ENCODE measurements at regions of chr10 and their contacts with region 1.

Region 1: GRCh38 chr10:88932539-88933256 is 19.9 kb downstream of the ACTA2 start:
- DNase-seq: peak; percentile 83
- H3K4me3 ChIP-seq: no peak overlapping the region
- H3K27ac ChIP-seq: peak overlapping the region; percentile 64 to 97 (median 70)
- H3K4me1 ChIP-seq: peaks cover 0 to 38% (median 21%) of the 10 kb centered on the region in 4 donors
- H3K27me3 ChIP-seq: no peaks in the 10 kb centered on the region
- CTCF ChIP-seq: peak; percentile 82 to 96 (median 91)
- EP300 ChIP-seq: no peak
- POLR2A ChIP-seq: no peak

Region 2: DNA sequence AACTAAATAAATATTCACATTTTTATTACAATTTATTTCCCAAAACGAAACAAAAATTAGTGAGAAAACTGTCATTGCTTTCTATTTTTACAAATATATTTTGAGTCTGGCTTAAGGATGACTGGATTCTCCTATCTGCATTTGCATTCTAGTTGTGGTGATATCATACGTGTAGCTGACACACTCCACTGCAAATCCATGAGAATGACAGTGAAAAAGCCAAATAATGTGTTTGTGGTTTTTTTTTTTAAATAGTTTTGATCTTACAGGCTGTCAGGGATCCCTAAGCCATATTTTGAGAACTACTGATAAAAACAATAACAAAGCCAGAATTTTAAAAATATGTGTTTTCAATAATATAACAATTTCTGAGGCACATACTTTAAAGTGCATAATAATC is 58.4 kb before region 1 on chr10:
- intact Hi-C with region 1: no loop called
- DNase-seq: no peak
- H3K4me3 ChIP-seq: no peak overlapping the region
- H3K27ac ChIP-seq: no peak overlapping the region
- H3K4me1 ChIP-seq: peaks cover 0 to under 1% (median 0%) of the 10 kb centered on the region in 4 donors
- H3K27me3 ChIP-seq: no peaks in the 10 kb centered on the region
- CTCF ChIP-seq: no peak
- EP300 ChIP-seq: no peak
- POLR2A ChIP-seq: no peak

Region 3: DNA sequence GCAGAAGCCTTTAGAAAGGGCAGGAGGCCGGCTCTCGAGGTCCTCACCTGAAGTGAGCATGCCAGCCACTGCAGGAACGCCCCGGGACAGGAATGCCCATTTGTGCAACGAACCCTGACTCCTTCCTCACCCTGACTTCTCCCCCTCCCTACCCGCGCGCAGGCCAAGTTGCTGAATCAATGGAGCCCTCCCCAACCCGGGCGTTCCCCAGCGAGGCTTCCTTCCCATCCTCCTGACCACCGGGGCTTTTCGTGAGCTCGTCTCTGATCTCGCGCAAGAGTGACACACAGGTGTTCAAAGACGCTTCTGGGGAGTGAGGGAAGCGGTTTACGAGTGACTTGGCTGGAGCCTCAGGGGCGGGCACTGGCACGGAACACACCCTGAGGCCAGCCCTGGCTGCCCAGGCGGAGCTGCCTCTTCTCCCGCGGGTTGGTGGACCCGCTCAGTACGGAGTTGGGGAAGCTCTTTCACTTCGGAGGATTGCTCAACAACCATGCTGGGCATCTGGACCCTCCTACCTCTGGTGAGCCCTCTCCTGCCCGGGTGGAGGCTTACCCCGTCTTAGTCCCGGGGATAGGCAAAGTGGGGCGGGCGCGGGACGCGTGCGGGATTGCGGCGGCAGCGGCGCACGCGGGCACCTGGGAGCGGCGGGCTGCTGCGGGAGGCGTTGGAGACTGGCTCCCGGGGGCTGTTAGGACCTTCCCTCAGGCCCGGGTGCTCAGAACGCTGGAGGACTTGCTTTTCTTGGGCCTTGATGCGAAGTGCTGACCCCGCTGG is 57.9 kb after region 1 on chr10 and contains the start of gene FAS:
- intact Hi-C with region 1: loop called (anchors 1 kb)
- DNase-seq: peak; percentile 91
- H3K4me3 ChIP-seq: peak within 1 kb of the TSS; percentile 72 to 88 (median 78)
- H3K27ac ChIP-seq: peak within 1 kb of the TSS; percentile 87 to 98 (median 93)
- H3K4me1 ChIP-seq: peaks cover 0 to 60% (median 33%) of the 10 kb centered on the region in 4 donors
- H3K27me3 ChIP-seq: no peaks in the 10 kb centered on the region
- CTCF ChIP-seq: no peak
- EP300 ChIP-seq: no peak
- POLR2A ChIP-seq: peak; percentile 33 to 61
- total RNA-seq, gene FAS: 14.3 to 44.6 (median 22.1) TPM

Region 4: GRCh38 chr10:89115876-89116627 is 183.4 kb after region 1 on chr10:
- intact Hi-C with region 1: no loop called
- DNase-seq: no peak
- H3K4me3 ChIP-seq: no peak overlapping the region
- H3K27ac ChIP-seq: no peak overlapping the region
- H3K4me1 ChIP-seq: no peaks in the 10 kb centered on the region
- H3K27me3 ChIP-seq: no peaks in the 10 kb centered on the region
- CTCF ChIP-seq: no peak
- EP300 ChIP-seq: no peak
- POLR2A ChIP-seq: no peak

Region 5: DNA sequence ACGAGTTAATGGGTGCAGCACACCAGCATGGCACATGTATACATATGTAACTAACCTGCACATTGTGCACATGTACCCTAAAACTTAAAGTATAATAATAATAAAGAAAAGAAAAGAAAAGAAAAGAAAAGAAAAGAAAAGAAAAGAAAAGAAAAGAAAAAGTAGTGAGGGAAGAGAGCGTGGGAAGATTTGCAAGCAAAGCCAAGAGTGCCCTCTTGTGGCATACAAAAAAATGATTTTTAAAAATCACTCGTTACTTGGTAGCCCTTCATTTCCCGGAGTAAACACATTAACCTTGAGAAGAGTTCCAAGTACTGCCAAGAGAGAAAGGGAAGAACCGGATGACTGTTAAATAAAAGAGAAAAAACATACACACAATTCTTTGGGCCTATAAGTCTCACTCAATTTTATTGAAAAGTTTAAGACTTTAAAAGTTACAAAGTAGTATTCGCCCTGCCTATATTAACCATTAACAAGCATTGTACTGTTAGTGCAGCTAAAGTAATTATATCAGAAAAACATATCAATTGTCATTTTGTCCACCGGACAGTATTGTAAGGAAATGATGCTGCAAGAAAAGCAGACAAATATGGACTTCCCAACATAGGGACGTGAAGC is 280.6 kb after region 1 on chr10:
- intact Hi-C with region 1: loop called (anchors 2 kb)
- DNase-seq: no peak
- H3K4me3 ChIP-seq: no peak overlapping the region
- H3K27ac ChIP-seq: no peak overlapping the region
- H3K4me1 ChIP-seq: peaks cover 0 to 14% (median 7%) of the 10 kb centered on the region in 4 donors
- H3K27me3 ChIP-seq: peaks cover 0 to 26% (median 1%) of the 10 kb centered on the region in 3 donors
- CTCF ChIP-seq: peak; percentile 55 to 69 (median 58)
- EP300 ChIP-seq: no peak
- POLR2A ChIP-seq: no peak

Measured in sigmoid colon (tissue), 7 donors.